Prostate gland (tissue), 2 donors: ENCODE measurements at regions of chr17 and their contacts with region 1.

Region 1: DNA sequence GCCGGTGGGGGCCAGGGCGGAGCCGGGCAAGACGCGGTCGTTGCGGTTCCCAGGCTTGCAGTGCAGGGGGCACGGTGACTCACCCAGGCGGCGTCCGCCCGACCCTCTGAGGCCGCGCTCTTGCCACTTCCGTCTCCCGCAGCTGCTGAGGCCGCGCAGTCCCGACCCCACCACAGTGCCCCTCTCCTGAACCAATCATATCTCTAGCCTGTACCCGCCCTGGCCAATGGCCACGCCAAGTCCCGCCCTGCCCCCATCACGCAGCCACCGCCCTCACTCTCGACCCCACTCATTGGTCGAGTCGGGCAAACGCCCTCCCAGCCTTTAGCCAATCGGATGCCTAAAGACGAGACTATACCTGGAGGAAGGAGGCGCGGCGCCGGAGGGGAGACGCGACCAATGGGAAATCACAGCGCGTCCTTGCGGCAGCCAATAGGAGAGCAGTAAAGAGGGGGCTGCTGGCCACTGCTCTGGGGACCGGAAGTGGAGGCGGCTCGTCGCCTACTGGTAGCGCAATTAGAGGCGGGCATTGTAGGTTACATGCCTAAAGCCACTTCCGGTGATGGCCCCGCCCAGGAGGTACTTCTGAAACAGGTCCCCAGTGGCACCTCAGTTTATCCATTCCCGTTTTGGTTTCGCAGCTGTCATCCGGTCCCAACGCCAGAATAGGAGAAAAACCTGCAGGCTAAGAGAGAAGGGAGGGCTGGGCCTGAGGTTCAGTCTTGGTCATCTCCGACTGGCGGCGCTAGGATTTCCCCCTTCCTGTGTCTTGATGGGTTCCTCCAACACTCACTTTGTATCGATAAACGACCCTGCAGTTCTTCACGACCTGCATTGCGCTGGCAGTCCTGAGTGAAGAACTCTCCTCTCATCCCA is 3.5 kb upstream of the MTMR4 start:
- DNase-seq: peak; percentile 100
- H3K4me3 ChIP-seq: peak overlapping the region; percentile 71 to 74
- H3K27ac ChIP-seq: peak overlapping the region; percentile 97 to 98
- H3K4me1 ChIP-seq: peaks cover 14% of the 10 kb centered on the region
- H3K27me3 ChIP-seq: no peaks in the 10 kb centered on the region
- CTCF ChIP-seq: peak in 1 of 4 experiments; percentile 62
- POLR2A ChIP-seq: peak; percentile 56

Region 2: GRCh38 chr17:58082870-58083490 is 435.0 kb before region 1 on chr17 and contains the start of gene DYNLL2:
- intact Hi-C with region 1: loop called (anchors 5 kb)
- DNase-seq: peak; percentile 86
- H3K4me3 ChIP-seq: peak within 1 kb of the TSS; percentile 99
- H3K27ac ChIP-seq: peak within 1 kb of the TSS; percentile 90 to 91
- H3K4me1 ChIP-seq: peaks cover 21% of the 10 kb centered on the region
- H3K27me3 ChIP-seq: no peaks in the 10 kb centered on the region
- CTCF ChIP-seq: no peak
- POLR2A ChIP-seq: no peak
- total RNA-seq, gene DYNLL2: 29.9 to 33.0 TPM

Region 3: DNA sequence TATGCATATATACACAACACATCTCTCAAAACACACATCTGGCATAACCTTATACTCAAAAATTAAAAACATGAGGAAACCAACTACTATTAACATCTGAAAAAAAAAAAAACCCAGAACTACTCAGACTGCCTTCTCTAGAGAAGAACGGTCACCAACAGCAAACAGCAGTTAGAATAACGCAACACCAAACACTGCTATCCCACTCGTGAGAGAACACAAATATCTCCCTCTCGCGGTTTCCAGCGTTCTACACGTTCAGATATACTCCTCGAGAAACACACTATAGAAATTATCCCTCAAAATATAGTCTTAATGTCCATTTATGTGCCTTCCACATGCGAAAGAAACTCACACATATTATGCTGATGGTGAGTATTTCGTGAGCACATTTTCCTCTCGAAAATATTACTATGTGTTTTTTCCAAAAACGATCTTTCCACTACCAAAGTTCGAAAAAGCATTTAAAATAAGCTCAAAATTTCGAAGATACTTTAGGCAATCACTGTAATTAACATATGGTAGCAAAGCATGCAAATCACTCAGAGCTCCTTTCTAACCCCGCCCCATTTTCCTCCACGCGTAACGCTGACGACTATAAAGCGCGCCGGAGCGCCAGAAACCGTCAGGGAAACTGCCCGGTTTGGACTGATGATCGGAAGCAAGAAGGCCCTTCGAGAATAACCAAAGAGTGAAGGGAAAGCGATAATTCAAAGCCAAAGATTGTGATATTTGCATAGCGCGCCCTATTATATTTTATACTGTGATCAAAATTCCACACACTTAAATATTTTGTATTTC is 113.8 kb after region 1 on chr17:
- intact Hi-C with region 1: loop called (anchors 10 kb)
- DNase-seq: peak; percentile 92
- H3K4me3 ChIP-seq: peak overlapping the region; percentile 12 to 32
- H3K27ac ChIP-seq: peak overlapping the region; percentile 80 to 84
- H3K4me1 ChIP-seq: no peaks in the 10 kb centered on the region
- H3K27me3 ChIP-seq: no peaks in the 10 kb centered on the region
- CTCF ChIP-seq: peak in 3 of 4 experiments; percentile 14 to 50 (median 42)
- POLR2A ChIP-seq: peak; percentile 95

Region 4: DNA sequence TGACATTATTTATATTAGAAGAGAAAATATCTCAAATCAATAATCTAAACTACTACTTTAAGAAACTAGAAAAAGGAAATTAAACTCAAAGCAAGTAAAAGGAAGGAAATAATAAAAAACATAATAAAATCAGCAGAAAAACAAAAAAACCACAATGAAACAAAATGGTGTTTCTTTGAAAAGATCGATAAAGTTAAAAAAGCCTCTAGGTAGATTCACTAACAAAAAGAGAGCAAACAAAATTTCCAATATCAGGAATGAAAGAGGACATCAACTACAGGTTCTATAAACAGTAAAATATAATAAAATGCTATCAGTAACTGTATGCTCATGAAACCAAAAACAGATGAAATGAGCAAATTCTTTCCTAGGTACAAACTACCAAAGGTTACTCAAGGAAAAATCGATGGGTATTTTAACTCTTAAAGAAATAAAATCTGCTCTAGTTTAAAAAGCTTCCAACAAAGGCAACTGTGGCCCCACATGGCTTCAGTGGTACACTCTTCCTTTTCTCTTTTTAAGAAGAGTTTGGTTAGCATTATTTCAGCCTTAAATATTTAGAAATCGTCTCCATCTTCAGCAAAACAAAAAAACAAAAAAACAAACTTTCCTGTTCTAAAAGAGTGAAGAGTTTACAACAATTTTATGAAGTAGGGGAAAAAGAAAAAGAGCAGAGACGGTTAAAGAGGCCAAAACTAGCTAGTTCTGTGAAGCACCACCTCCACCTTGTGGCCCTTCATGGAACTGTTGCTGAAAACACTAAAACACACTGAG is 486.6 kb after region 1 on chr17:
- intact Hi-C with region 1: loop called (anchors 2 kb)
- DNase-seq: peak; percentile 60
- H3K4me3 ChIP-seq: no peak overlapping the region
- H3K27ac ChIP-seq: peak overlapping the region; percentile 32 to 48
- H3K4me1 ChIP-seq: no peaks in the 10 kb centered on the region
- H3K27me3 ChIP-seq: no peaks in the 10 kb centered on the region
- CTCF ChIP-seq: peak; percentile 91 to 94 (median 92)
- POLR2A ChIP-seq: no peak

Region 5: DNA sequence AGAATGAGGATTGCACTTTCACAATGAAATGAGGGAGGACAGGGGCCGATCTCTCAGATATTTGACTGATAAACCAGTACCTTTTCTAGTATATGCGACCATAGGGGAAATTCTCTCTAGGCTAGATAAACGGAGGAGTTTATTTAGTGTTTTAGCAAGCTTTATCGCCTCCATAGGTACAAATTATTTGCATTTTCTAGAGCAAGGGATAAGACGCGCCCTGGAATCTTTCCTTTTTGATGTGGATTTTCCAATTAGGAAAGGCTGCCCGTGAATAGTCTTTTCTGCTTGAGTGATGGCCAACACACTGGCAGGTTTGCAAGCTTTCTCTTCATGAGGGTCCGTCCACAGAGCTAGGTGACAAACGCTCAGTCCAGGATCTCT is 702.0 kb after region 1 on chr17:
- intact Hi-C with region 1: loop called (anchors 10 kb)
- DNase-seq: no peak
- H3K4me3 ChIP-seq: peak overlapping the region; percentile 57 to 71
- H3K27ac ChIP-seq: peak overlapping the region in 1 of 2 donors; percentile 77
- H3K4me1 ChIP-seq: no peaks in the 10 kb centered on the region
- H3K27me3 ChIP-seq: no peaks in the 10 kb centered on the region
- CTCF ChIP-seq: no peak
- POLR2A ChIP-seq: no peak

Region 6: DNA sequence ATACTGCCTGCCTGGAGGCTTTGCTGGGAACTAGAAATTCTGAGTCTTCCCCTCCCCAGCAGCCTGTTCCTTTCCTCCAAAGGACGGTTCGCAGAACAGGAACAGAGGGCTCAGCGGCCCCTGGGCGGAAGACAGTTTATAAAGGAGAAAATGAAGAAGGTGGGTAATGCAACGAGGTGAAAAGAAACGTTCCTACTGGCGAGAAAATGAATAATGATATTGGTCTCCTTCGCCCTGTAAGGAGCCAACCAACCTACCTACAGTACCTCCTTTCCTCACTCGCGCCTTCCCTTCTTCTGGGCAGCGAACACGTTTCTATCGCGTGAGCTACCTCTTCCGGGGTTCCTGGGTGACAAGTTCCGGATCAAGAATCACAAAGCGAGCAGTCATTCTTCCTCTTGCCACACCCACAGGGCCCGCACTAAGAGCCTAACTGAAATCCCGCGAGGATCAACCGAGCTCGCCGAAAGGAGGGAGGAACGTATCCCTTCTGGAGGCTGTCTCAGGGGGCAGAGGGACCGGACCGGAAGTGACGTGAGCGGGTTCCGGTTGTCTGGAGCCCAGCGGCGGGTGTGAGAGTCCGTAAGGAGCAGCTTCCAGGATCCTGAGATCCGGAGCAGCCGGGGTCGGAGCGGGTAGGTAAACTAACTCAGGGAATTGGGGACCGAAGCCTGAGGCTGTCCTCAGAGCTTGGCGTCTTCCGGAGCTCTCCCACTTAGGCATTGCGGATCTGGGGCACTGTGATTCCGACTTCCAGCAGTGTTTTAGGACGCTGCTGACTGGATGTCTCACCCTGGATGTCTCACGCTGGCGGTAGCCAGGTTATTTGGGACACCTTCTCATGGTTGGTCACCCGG is 1189.4 kb after region 1 on chr17 and contains the starts of genes PTRH2 and VMP1:
- intact Hi-C with region 1: loop called (anchors 10 kb)
- DNase-seq: peak; percentile 99
- H3K4me3 ChIP-seq: peak within 1 kb of the TSS; percentile 57 to 70
- H3K27ac ChIP-seq: peak within 1 kb of the TSS; percentile 82 to 90
- H3K4me1 ChIP-seq: no peaks in the 10 kb centered on the region
- H3K27me3 ChIP-seq: no peaks in the 10 kb centered on the region
- CTCF ChIP-seq: peak in 1 of 4 experiments; percentile 19
- POLR2A ChIP-seq: peak; percentile 71
- total RNA-seq, gene PTRH2: 29.1 to 38.3 TPM
- total RNA-seq, gene VMP1: 175 to 203 TPM